ENCODE measurements at regions of chr3 and their contacts with region 1.

Region 1: DNA sequence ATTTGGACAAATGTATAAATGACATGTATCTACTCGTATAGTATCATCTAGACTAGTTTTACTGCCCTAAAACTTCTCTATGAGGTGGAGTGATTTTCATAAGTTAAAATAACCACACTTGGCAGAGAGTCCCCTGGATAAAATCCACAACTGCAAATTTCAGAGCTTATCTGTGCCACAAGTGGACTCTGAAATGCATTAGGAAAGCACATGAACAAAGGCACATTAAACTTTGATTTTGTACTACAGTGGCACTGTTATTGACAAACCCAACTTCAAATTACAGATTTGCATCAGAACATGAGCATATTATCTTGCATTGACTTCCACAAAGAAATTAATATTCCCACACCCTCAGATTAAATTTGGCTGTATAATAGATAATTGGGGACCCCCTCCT is 58.1 kb upstream of the EIF5A2 start:
- DNase-seq: no peak
- ATAC-seq: no peak
- H3K4me3 ChIP-seq: no peak overlapping the region
- H3K27ac ChIP-seq: no peak overlapping the region
- H3K4me1 ChIP-seq: no peaks in the 10 kb centered on the region
- H3K27me3 ChIP-seq: no peaks in the 10 kb centered on the region
- CTCF ChIP-seq: no peak

Region 2: DNA sequence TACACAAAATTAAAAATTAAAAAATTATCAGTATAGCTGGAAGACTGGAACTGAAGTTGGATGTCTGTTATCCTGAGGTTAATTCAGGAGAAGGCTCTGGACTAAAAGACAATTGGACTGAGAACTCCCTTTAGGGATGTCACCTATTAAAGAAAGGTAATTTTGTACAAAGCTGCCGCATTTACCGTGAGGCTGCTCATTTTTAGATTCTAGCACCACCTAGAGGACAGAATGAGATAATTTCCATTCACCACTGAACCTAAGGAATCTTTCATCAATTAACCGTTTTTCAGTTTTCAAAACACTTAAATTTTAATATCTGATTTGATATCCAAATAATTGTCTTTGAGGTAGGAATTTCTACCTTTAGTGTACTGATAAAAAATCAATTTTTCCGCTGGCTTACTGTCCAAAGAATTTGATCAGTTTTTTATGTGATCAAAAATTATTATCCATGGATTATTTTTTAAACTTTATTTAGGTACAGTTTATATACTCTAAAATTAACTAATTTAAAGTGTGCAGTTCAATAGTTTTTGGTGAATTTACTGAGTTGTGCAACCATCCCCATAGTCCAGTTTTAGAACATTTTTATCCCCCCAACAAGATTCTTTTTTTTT is 600.4 kb after region 1 on chr3:
- intact Hi-C with region 1: loop called (anchors 5 kb)
- DNase-seq: no peak
- ATAC-seq: peak; percentile 56 to 73
- H3K4me3 ChIP-seq: no peak overlapping the region
- H3K27ac ChIP-seq: no peak overlapping the region
- H3K4me1 ChIP-seq: peaks cover 19% of the 10 kb centered on the region
- H3K27me3 ChIP-seq: no peaks in the 10 kb centered on the region
- CTCF ChIP-seq: peak; percentile 75

Measured in lower lobe of right lung (tissue), 2 donors.